ENCODE measurements at regions of chr17 and their contacts with region 1.

Region 1: DNA sequence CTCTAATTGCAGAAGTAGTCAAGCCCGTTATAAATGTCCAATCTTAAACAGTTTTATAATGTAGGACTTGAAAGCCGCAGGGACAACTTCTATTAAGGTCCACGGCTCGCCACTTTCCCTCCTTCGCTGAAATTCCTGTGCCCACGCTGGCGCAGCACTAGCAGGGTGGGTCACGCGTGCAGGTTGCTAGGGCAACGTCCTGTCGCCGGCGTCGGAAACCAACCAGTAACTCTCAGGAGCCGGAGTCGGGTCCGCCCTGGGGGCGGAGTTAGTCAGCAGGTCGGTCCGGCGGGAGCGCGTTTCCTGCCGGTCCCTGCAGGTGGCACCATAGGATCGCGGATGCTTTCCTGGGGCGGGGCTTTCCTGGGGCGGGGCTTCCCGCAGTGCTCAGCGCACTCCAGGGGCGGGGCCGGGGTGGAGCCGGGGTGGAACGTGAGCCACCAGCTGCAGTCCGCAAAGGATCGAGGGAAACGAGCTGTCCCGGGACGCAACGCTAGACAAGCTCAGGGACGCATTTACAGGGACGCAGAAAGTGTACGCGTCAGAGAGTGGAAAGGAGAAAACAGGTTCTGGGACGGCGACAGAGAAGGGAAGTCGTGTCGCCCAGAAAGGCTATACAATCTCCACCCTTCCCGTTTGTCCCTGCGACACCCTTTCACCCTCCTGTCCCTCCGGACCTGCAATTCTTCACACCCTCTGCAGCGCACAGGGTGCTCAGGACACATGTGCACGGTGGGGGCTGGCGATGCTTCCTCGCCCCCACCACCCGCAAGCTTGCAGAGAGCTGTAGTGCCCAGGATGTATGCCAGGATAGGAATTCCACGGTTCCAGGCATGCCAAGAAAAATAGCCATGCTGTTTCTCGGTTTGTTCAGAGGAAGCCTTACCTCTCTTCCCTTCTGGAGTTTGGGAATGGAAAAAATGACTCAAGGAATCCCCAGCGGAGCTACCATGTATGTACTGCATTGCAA is 12.4 kb downstream of the COPZ2 start:
- DNase-seq: peak; percentile 96 to 99 (median 97)
- ATAC-seq: peak; percentile 91
- H3K4me3 ChIP-seq: peak overlapping the region; percentile 57 to 60
- H3K4me3 Mint-ChIP-seq: peak overlapping the region; percentile 84
- H3K27ac ChIP-seq: peak overlapping the region in 1 of 2 experiments; percentile 48
- H3K27ac Mint-ChIP-seq: peak overlapping the region; percentile 83
- H3K4me1 ChIP-seq: peaks cover 35% of the 10 kb centered on the region
- H3K4me1 Mint-ChIP-seq: peaks cover 23% of the 10 kb centered on the region
- H3K27me3 ChIP-seq: peaks cover 6 to 29% of the 10 kb centered on the region in 2 experiments
- H3K27me3 Mint-ChIP-seq: peaks cover 46% of the 10 kb centered on the region
- CTCF ChIP-seq: peak; percentile 70

Region 2: GRCh38 chr17:47905221-47905781 is 119.9 kb before region 1 on chr17:
- CTCF ChIA-PET with region 1: no interaction called
- POLR2A ChIA-PET with region 1: no interaction called
- intact Hi-C with region 1: no loop called
- DNase-seq: no peak
- ATAC-seq: no peak
- H3K4me3 ChIP-seq: no peak overlapping the region
- H3K4me3 Mint-ChIP-seq: no peak overlapping the region
- H3K27ac ChIP-seq: no peak overlapping the region
- H3K27ac Mint-ChIP-seq: peak overlapping the region; percentile 55
- H3K4me1 ChIP-seq: peaks cover 6% of the 10 kb centered on the region
- H3K4me1 Mint-ChIP-seq: peaks cover 53% of the 10 kb centered on the region
- H3K27me3 ChIP-seq: no peaks in the 10 kb centered on the region
- H3K27me3 Mint-ChIP-seq: no peaks in the 10 kb centered on the region
- CTCF ChIP-seq: no peak

Region 3: DNA sequence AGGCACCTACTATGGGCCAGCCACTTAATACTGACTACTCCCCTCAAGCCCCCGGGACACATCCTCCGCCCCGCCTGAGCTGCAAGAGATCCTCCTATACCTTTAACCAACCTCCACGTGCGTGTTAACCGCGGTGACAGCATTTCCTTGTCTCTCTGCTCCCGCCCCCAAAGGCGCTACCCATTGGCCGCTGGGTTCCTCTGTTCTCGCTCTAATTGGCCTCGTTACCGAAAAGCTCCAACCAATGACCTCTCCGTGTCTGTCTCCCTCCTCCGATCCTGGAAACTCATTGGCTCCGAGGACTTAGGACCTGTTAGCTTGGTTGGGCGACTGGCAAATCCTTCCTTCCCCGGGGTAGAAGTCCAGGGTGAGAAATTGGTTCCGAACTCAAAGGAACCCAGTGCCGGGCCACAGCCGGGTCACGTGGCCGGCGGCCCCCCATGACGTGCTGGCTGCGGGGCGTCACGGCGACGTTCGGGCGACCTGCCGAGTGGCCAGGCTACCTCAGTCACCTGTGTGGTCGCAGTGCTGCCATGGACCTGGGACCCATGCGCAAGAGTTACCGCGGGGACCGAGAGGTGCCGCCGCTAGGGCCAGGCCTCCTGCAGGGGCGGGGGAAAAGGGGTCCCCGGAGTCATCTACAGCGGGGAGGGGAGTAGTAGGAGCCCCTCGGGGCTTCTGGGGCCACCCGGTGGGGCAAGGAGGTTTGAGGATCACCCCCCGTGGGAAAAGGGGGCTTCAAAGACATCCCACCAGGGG is 83.8 kb before region 1 on chr17 and contains the start of gene PNPO:
- CTCF ChIA-PET with region 1: interaction called, 3 read pairs
- POLR2A ChIA-PET with region 1: no interaction called
- intact Hi-C with region 1: loop called in 1 of 2 experiments (anchors 1 kb)
- DNase-seq: peak; percentile 82 to 98 (median 92)
- ATAC-seq: peak; percentile 97
- H3K4me3 ChIP-seq: peak within 1 kb of the TSS; percentile 72 to 92
- H3K4me3 Mint-ChIP-seq: peak within 1 kb of the TSS; percentile 86
- H3K27ac ChIP-seq: peak within 1 kb of the TSS; percentile 57 to 88
- H3K27ac Mint-ChIP-seq: peak within 1 kb of the TSS; percentile 87
- H3K4me1 ChIP-seq: peaks cover 47% of the 10 kb centered on the region
- H3K4me1 Mint-ChIP-seq: peaks cover 54% of the 10 kb centered on the region
- H3K27me3 ChIP-seq: no peaks in the 10 kb centered on the region
- H3K27me3 Mint-ChIP-seq: no peaks in the 10 kb centered on the region
- CTCF ChIP-seq: no peak
- total RNA-seq, gene PNPO: 5.7 to 5.8 TPM

Region 4: DNA sequence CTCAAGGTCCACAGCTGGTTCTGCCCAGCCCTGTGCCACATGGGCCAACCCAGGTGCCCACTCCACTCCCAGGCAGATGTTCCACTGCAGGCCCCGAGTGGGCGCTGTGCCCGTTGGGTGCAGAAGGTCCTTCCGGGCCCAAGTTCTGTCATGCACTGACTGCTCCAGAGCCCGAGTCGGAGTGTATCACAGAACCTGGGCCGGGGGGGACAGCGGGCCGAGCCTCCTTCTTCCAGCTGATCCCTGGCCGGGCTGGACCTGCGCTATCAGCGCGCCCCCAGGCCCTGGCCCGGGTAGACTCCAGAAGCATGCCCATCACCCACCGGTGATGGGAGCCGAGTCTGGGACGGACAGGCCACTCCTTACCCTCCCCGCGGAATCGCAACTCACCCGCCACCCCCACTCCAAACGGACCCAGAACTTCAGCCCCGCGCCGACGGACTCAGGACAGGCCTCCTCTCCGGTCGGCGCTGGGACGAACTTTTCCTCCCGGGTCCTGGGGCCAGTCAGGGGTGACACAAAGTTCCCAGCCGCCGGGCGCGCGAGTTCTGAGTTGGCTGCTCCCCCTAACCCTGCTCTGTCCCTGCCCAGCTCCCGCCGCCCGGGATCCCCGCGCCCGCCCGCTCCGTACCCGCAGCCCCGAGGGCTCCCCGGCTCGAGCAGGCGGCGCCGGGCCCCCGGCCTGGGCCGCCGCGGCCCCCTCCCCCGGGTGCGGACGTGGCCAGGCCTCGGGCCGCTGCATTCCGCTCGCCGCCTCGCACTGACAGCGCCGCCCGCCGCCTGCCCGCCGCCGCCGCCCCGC is 12.0 kb after region 1 on chr17 and contains the start of gene COPZ2:
- CTCF ChIA-PET with region 1: interaction called, 42 read pairs
- POLR2A ChIA-PET with region 1: interaction called, 6 read pairs
- intact Hi-C with region 1: no loop called
- DNase-seq: peak in 8 of 9 experiments; percentile 51 to 83 (median 72)
- ATAC-seq: peak; percentile 98
- H3K4me3 ChIP-seq: peak within 1 kb of the TSS; percentile 70 to 73
- H3K4me3 Mint-ChIP-seq: peak within 1 kb of the TSS; percentile 87
- H3K27ac ChIP-seq: no peak within 1 kb of the TSS
- H3K27ac Mint-ChIP-seq: no peak within 1 kb of the TSS
- H3K4me1 ChIP-seq: no peaks in the 10 kb centered on the region
- H3K4me1 Mint-ChIP-seq: peaks cover 6% of the 10 kb centered on the region
- H3K27me3 ChIP-seq: peaks cover 0 to 15% of the 10 kb centered on the region in 2 experiments
- H3K27me3 Mint-ChIP-seq: peaks cover 29% of the 10 kb centered on the region
- CTCF ChIP-seq: peak; percentile 83
- total RNA-seq, gene COPZ2: 0.57 to 0.92 TPM

Region 5: DNA sequence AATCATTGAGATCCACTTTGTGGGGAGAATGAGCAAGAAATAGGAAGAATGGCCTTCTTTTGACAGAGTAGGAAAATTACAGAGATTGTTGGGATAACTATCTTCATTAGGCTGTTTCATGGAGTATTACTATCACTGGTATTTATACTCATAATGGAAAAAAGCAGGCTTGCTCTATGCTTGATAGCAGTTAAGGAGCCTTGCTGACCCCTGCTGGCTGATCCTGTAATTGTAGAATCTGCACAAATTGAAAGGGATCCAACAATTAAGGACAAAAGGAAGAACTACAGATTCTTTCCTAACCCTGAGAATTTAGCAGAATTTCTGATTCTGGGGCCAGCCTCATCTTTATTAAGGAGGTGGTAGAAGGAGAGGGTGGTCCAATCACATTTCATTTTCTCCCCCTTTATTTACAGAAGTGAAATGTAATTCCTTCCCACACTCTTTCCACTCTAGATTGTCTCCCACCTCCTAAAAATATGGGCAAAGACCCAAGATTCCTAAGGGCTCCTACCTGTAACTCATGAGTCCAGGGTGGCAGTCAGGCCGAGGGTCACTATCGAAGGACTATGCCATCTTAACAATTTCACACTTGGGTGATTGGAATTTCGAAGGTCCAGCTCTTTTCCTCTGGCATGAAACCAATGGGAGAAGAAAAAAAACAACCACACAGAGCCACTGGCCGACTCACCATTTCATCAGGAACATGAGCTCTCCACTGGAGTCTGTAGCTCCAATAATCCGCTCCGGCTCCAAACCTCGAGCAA is 49.3 kb after region 1 on chr17:
- CTCF ChIA-PET with region 1: interaction called, 253 read pairs
- POLR2A ChIA-PET with region 1: interaction called, 3 read pairs
- intact Hi-C with region 1: loop called (anchors 1 kb)
- DNase-seq: peak; percentile 56 to 82 (median 78)
- ATAC-seq: peak; percentile 87
- H3K4me3 ChIP-seq: no peak overlapping the region
- H3K4me3 Mint-ChIP-seq: no peak overlapping the region
- H3K27ac ChIP-seq: no peak overlapping the region
- H3K27ac Mint-ChIP-seq: no peak overlapping the region
- H3K4me1 ChIP-seq: no peaks in the 10 kb centered on the region
- H3K4me1 Mint-ChIP-seq: no peaks in the 10 kb centered on the region
- H3K27me3 ChIP-seq: no peaks in the 10 kb centered on the region
- H3K27me3 Mint-ChIP-seq: no peaks in the 10 kb centered on the region
- CTCF ChIP-seq: peak; percentile 76

Region 6: DNA sequence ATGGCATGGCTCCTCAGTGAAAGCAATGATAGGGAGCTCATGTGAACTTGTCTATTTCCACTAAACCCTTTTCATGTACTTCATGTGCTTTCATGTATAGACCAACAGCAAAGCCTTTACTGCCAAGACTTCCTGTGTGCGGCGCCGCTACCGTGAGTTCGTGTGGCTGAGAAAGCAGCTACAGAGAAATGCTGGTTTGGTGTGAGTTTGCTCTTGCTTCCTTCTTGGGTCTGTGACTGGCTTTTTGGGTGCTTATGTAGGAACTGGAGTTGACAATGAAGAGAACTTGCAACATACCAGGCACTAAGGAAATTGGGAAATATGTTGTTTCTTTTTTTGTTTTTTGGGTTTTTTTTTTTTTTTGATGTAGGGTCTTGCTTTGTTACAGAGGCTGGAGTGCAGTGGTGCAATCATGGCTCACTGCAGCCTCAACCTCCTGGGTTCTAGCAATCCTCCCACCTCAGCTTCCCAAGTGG is 88.0 kb after region 1 on chr17:
- CTCF ChIA-PET with region 1: interaction called, 10 read pairs
- POLR2A ChIA-PET with region 1: no interaction called
- intact Hi-C with region 1: no loop called
- DNase-seq: peak; percentile 6 to 77 (median 54)
- ATAC-seq: peak; percentile 83
- H3K4me3 ChIP-seq: no peak overlapping the region
- H3K4me3 Mint-ChIP-seq: peak overlapping the region; percentile 63
- H3K27ac ChIP-seq: peak overlapping the region in 1 of 2 experiments; percentile 65
- H3K27ac Mint-ChIP-seq: peak overlapping the region; percentile 89
- H3K4me1 ChIP-seq: peaks cover 33% of the 10 kb centered on the region
- H3K4me1 Mint-ChIP-seq: peaks cover 44% of the 10 kb centered on the region
- H3K27me3 ChIP-seq: no peaks in the 10 kb centered on the region
- H3K27me3 Mint-ChIP-seq: no peaks in the 10 kb centered on the region
- CTCF ChIP-seq: no peak

Region 7: GRCh38 chr17:48593840-48594537 is 568.8 kb after region 1 on chr17:
- CTCF ChIA-PET with region 1: interaction called, 11 read pairs
- POLR2A ChIA-PET with region 1: no interaction called
- intact Hi-C with region 1: no loop called
- DNase-seq: peak; percentile 69 to 88 (median 80)
- ATAC-seq: peak; percentile 76
- H3K4me3 ChIP-seq: peak overlapping the region in 1 of 2 experiments; percentile 46
- H3K4me3 Mint-ChIP-seq: peak overlapping the region; percentile 81
- H3K27ac ChIP-seq: no peak overlapping the region
- H3K27ac Mint-ChIP-seq: no peak overlapping the region
- H3K4me1 ChIP-seq: peaks cover 41% of the 10 kb centered on the region
- H3K4me1 Mint-ChIP-seq: peaks cover 46% of the 10 kb centered on the region
- H3K27me3 ChIP-seq: peaks cover 43 to 55% of the 10 kb centered on the region in 2 experiments
- H3K27me3 Mint-ChIP-seq: peaks cover 82% of the 10 kb centered on the region
- CTCF ChIP-seq: peak; percentile 85